Aorta (tissue), 5 donors: ENCODE measurements at regions of chr9 and their contacts with region 1.

Region 1: GRCh38 chr9:21527579-21527978 is 45.5 kb upstream of the IFNE start:
- DNase-seq: no peak
- ATAC-seq: no peak
- H3K4me3 ChIP-seq: no peak overlapping the region
- H3K27ac ChIP-seq: no peak overlapping the region
- H3K4me1 ChIP-seq: no peaks in the 10 kb centered on the region
- H3K27me3 ChIP-seq: no peaks in the 10 kb centered on the region

Region 2: DNA sequence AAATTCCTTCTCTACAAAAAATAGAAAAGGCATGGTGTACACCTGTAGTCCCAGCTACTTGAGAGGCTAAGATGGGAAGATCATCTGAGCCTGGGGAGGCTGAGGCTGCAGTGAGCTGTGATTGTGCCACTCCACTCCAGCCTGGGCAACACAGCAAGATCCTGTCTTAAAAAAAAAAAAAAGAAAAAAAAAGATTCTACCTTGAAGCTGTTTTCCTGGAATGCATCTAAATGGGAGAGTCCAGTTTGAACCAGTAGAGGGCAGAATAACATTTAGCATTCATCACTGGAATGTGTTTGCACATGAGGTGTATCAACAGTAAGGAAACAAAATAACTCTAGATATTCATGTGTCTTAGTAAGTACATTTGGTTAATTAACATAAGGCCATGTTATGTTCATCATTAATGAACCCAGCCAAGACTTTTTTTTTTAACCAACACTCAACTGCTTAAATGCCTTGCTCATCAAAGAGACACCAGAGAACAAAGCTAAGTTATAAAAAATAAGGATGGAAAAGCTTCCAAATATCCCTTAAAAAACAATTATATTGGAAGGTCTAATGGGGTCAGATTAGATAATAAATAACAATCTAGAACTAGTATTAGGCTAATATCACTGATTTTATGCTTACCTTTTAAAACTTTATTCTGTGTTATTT is 61.6 kb before region 1 on chr9:
- intact Hi-C with region 1: loop called in 1 of 2 experiments (anchors 10 kb)
- DNase-seq: no peak
- ATAC-seq: no peak
- H3K4me3 ChIP-seq: no peak overlapping the region
- H3K27ac ChIP-seq: no peak overlapping the region
- H3K4me1 ChIP-seq: no peaks in the 10 kb centered on the region
- H3K27me3 ChIP-seq: no peaks in the 10 kb centered on the region

Region 3: DNA sequence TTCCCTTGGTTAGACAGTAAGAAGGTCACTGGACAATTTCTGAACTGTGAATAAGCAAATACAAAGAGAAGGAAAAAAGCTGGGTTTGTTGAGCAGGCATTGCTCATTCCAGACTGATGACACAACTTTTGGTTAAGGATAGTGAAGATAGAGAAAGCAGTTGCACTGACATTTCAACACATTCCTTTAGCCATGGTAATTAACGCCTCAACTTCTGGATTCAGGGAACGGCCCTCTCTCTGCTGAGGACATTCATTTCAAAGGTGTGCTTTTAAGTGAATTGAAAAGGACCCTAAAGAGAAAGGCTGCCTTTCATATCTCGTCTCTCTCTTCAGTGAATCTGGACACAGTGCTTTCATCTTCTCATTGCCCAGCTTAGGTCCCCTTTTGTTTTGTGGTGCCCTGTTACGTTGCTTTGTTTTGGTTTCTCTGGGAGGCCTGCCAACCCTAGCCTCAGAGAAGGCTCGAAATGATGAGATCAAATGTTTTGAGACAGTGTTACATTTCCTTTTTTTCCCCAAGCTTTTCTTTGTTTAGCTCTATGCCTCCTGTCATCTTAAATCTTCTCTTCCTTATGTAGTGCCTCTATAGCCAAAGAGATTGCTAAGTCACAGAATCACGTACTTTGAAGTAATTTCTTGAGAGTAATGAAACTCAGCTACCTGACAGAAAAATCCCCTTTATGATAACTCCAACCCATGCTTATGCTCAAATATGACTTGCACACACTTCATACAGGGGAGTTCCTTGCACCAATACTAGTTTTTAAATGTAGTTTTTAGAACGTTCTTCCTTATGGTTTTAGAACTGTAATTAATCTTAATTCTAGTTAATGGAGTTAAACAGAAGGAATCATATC is 49.0 kb after region 1 on chr9:
- intact Hi-C with region 1: loop called in 1 of 2 experiments (anchors 10 kb)
- DNase-seq: peak in 1 of 2 donors; percentile 53
- ATAC-seq: peak; percentile 45
- H3K4me3 ChIP-seq: no peak overlapping the region
- H3K27ac ChIP-seq: no peak overlapping the region
- H3K4me1 ChIP-seq: no peaks in the 10 kb centered on the region
- H3K27me3 ChIP-seq: no peaks in the 10 kb centered on the region

Region 4: DNA sequence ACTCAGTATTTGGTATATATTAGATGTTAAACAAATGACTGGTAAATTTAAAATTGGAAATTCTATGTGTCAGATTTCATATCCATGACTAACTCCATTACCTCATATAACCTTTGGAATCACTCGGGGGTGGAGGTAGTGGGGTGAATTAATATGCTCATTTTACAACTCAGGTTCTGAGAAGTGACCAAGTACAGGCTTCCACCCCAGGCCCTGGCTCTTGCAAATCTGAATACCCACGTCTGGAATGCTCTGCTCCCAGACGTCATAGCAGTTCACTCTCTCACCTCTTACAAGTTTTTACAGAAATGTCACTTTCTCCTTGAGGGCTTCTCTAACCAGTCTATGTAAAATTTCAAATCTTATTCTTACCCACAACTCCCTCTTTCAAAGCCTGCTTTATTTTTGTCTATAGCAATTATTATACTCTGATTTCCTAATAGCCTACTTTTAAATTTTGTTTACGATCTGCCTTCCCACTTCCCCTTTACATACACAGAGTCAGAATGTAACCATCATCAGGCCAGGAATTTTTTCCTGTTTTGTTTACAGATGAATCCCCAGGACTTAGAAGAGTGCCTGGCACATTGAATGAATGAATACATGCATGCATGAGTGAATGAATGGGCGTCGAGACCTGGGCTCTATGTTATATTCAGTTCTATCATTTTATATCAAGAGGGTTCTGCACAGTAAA is 88.7 kb after region 1 on chr9:
- intact Hi-C with region 1: no loop called
- DNase-seq: no peak
- ATAC-seq: no peak
- H3K4me3 ChIP-seq: no peak overlapping the region
- H3K27ac ChIP-seq: no peak overlapping the region
- H3K4me1 ChIP-seq: no peaks in the 10 kb centered on the region
- H3K27me3 ChIP-seq: peaks cover 0 to 2% of the 10 kb centered on the region in 2 donors

Region 5: DNA sequence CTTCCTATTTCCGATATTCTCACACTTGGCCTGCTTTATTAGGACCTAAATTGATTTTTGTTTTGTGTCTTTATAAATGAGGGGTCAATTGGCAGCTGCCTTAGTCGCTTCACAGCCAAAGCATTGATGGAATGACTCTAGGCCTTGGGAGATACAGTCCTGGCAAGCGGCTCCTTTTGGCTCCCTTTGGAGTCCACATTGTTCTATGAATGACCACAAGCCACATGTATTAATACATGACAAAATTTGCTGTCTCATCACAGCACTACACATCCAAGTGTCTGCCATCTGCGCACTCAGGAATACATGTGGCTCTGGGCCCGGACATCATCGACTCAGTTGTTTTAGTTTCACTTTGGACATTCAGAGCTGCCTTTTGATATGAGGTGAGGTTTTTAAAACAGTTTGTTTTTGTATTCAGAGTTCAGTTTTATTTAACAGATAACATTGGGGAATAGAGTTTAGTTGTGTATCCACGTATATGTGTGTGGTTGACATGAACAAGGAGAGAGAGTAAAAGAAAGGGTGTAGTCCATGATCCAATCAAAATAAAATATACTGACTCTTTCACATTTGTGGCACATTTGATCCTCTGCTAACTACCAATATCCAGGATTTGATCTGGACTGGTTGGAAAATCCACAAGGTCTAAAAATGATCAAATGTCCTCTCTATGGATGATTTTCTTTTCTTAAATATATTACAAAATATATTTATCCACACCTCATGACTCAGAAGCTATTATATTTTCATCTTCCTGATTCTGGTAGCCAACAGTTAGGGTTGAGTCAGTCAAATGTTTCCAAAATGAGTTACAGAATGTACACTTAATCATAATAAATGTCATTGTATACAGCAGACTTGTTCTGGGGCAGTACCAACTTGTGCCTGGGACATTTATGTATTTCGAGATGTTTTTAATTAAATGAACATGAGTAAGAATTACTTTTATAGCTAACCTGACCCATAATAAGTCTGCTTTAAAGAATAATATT is 160.8 kb after region 1 on chr9:
- intact Hi-C with region 1: no loop called
- DNase-seq: peak in 1 of 2 donors; percentile 49
- ATAC-seq: peak; percentile 67
- H3K4me3 ChIP-seq: no peak overlapping the region
- H3K27ac ChIP-seq: no peak overlapping the region
- H3K4me1 ChIP-seq: no peaks in the 10 kb centered on the region
- H3K27me3 ChIP-seq: no peaks in the 10 kb centered on the region